Activated CD4-positive, alpha-beta memory T cell treated with anti-CD3 and anti-CD28 coated beads for 36 hours (primary cell): ENCODE measurements at regions of chr5 and their contacts with region 1.

Region 1: GRCh38 chr5:179623003-179623880 is at the start of gene HNRNPH1:
- DNase-seq: peak; percentile 99
- H3K4me3 Mint-ChIP-seq: peak within 1 kb of the TSS; percentile 98
- H3K27ac Mint-ChIP-seq: peak within 1 kb of the TSS; percentile 99
- H3K4me1 Mint-ChIP-seq: peaks cover 35% of the 10 kb centered on the region
- H3K27me3 Mint-ChIP-seq: no peaks in the 10 kb centered on the region
- total RNA-seq, gene HNRNPH1: 604 to 611 TPM

Region 2: DNA sequence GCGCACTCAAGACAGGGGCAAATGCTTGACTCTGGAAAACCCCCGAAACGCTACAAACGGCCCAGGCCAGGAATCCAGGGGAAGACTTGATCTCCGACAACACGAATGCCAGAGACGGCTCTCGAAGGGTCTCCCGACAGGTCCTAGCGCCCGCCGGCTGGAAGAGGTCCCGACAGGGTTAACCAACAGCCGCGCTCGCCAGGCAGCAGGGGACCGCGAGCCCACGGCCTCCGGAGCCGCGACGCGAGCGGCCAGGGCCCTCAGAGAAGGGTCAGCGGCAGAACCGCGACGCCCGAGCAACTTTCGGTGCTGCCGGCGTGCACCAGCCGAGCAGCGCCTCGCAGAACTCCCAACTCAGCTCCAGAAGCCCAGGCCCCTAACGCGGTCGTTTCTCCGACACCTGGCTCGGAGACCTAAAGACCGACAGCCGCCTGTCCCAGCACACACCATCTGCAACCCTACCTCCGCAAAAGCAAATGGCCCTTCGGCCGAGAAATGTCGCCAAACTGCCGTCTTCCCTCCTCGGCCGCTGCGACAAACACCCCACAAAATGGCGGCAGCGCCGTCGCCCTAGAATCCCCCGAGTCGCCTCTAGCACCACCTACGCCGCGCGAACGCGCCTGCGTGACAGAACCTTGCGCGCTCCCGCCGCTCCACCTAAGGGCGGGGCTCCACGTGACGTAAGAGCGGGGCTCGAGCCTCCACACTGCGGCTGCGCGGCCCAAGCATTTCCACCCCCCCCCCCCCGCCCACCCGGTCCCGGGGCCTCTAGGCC is 996.6 kb before region 1 on chr5 and contains the start of gene CLK4:
- CTCF ChIA-PET with region 1: no interaction called
- POLR2A ChIA-PET with region 1: no interaction called
- intact Hi-C with region 1: loop called (anchors 2 kb)
- DNase-seq: peak; percentile 97
- H3K4me3 Mint-ChIP-seq: peak within 1 kb of the TSS; percentile 92
- H3K27ac Mint-ChIP-seq: peak within 1 kb of the TSS; percentile 98
- H3K4me1 Mint-ChIP-seq: peaks cover 28% of the 10 kb centered on the region
- H3K27me3 Mint-ChIP-seq: no peaks in the 10 kb centered on the region
- total RNA-seq, gene CLK4: 25.1 to 26.0 TPM

Region 3: GRCh38 chr5:179154991-179155955 is 468.0 kb before region 1 on chr5:
- CTCF ChIA-PET with region 1: no interaction called
- POLR2A ChIA-PET with region 1: no interaction called
- intact Hi-C with region 1: no loop called
- DNase-seq: peak; percentile 24
- H3K4me3 Mint-ChIP-seq: no peak overlapping the region
- H3K27ac Mint-ChIP-seq: no peak overlapping the region
- H3K4me1 Mint-ChIP-seq: no peaks in the 10 kb centered on the region
- H3K27me3 Mint-ChIP-seq: peaks cover 4% of the 10 kb centered on the region

Region 4: DNA sequence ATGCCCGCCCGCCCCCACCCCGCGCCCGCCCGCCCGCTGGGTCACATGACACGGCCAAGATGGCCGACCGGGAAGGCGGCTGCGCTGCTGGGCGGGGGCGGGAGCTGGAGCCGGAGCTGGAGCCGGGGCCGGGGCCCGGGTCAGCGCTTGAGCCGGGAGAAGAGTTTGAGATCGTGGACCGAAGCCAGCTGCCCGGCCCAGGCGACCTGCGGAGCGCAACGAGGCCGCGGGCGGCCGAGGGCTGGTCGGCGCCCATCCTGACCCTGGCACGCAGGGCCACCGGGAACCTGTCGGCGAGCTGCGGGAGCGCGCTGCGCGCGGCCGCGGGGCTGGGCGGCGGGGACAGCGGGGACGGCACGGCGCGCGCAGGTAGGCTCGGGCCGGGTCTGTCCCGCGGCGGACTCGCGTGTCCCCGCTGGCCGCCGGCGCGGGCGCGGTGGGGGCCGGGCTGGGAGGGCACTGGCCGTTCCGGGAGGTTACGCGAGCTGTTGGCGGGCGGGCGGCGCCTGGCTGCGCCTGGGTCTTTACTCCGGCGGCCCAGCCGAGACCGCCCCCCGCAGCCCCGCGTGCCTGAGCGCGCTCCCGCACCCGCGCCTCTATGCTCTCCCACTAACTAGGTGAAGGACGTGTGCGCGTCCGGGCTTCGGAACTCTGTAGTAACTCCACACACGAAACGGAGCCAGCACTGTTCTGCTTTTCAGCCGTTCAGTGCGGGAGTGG is 72.6 kb before region 1 on chr5 and contains the start of gene RUFY1:
- CTCF ChIA-PET with region 1: no interaction called
- POLR2A ChIA-PET with region 1: interaction called, 24 read pairs
- intact Hi-C with region 1: loop called (anchors 2 kb)
- DNase-seq: peak; percentile 87
- H3K4me3 Mint-ChIP-seq: peak within 1 kb of the TSS; percentile 98
- H3K27ac Mint-ChIP-seq: peak within 1 kb of the TSS; percentile 99
- H3K4me1 Mint-ChIP-seq: peaks cover 36% of the 10 kb centered on the region
- H3K27me3 Mint-ChIP-seq: no peaks in the 10 kb centered on the region
- total RNA-seq, gene RUFY1: 30.3 to 34.0 TPM

Region 5: DNA sequence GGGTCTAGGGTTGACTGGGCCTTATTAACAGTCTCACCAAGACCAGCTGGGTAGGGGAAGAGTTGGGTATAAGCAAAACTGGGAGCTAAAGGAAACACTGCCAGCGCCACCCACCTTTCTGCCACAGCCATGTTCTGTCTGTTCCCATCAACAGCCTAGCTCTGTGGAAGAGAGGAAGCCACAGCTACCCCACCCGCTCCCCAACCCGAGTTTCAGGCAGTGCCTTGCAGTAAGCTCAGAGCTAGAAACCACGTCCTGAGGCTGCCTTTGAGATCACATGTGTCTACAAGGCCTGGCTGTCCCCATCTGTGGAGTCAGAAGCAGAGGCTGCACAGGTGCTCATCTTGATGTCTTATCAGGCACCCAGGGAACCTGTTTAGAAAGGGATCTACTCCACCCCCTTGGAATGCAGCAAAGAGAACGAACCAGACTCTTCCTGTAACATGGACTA is 15.1 kb before region 1 on chr5:
- CTCF ChIA-PET with region 1: interaction called, 13 read pairs
- POLR2A ChIA-PET with region 1: interaction called, 105 read pairs
- intact Hi-C with region 1: no loop called
- DNase-seq: peak; percentile 64
- H3K4me3 Mint-ChIP-seq: no peak overlapping the region
- H3K27ac Mint-ChIP-seq: peak overlapping the region; percentile 71
- H3K4me1 Mint-ChIP-seq: peaks cover 35% of the 10 kb centered on the region
- H3K27me3 Mint-ChIP-seq: no peaks in the 10 kb centered on the region

Region 6: DNA sequence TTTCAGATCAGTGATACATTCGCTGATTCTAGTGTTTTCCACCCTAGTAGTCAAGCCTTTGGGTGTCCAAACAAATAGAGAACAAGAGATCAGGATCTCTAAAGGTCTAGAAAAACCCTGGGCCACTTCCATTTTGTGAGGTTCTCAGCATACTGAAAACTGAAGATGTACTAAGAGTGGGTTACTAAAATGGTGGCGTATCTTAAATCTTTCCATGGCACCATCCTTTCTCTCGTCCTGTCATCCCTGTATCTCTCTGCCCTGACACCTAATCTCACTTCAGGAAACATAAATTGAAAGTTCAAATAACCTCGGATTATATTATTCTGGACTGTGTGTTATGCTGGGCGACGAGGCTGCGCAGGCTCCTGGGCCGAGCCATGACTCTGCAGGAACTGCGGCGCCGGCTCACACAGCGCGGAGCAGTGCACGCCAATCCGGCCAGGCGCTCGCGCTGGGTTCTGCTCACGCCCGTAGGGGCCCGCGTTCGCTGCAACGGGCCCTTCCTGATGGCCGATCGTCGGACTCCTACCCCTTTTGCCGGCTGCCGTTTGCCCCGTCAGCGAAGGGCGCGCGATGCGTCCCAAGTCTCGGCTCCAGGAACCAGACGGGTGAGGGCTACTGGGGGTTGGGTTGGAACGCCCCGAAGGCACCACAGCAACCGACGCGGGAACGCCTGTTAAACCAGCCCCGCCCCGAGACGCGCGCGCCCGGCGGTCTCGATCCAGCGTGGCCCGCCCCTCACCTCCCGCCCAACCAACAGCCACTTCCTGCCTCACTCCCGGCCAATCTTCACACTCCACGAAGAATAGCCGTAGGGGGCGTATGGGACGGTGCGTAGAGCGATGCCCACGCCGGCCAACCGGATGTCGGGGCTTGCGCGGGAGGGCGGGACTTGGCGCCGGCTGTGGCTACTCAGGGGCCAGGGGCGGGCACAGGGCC is 75.0 kb after region 1 on chr5:
- CTCF ChIA-PET with region 1: no interaction called
- POLR2A ChIA-PET with region 1: interaction called, 18 read pairs
- intact Hi-C with region 1: loop called (anchors 1 kb)
- DNase-seq: peak; percentile 100
- H3K4me3 Mint-ChIP-seq: peak overlapping the region; percentile 97
- H3K27ac Mint-ChIP-seq: peak overlapping the region; percentile 98
- H3K4me1 Mint-ChIP-seq: peaks cover 35% of the 10 kb centered on the region
- H3K27me3 Mint-ChIP-seq: no peaks in the 10 kb centered on the region

Region 7: DNA sequence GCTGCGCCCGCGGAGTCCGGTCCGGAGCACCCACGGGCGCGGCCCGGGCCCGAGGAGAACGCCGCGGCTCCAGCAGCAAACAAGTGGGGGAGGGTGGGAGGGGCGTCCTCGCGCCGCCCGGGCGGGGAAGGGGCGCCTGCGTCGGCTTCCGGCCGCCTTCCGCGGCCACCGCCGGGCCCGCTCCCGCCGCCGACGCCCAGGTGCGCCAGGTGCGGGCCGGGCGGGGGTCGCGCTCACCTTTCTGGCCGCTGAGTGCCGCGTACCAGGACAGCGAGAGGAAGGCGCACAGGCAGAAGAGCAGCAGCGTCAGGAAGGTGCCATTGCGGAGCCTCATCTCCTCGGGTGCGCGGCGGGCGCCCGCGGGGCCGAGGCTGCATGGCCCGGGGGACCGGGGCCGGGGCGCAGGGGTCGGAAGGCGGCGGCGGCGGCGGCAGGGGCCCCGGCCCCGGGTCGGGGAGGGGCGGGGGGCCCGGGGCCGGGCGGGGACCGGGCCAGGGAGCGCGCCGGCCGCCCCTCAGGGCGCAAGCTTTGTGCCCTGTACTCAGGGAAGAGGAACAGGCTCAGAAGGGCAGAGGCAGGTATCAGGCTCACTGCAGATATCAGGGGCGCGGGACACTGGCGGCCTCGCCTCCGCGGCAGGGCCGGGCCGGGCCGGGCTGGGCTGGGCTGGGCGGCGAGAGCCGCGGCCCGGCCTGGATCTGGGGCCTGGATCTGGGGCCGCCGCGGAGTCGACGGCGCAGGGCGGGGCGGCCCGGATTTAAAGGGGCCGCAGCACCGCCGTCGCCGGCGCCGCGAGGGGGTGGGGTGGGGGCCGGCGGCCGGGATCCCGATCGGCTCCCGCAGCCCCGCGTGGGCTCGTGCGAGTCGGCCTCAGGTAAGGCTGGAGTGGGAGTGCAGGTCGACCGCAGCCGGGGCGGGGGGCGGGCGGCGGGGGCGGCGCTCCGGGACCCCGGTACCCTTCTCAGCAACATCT is 183.3 kb after region 1 on chr5 and contains the start of gene MGAT4B:
- CTCF ChIA-PET with region 1: no interaction called
- POLR2A ChIA-PET with region 1: interaction called, 3 read pairs
- intact Hi-C with region 1: loop called (anchors 5 kb)
- DNase-seq: peak; percentile 72
- H3K4me3 Mint-ChIP-seq: peak within 1 kb of the TSS; percentile 86
- H3K27ac Mint-ChIP-seq: peak within 1 kb of the TSS; percentile 71
- H3K4me1 Mint-ChIP-seq: peaks cover 33% of the 10 kb centered on the region
- H3K27me3 Mint-ChIP-seq: no peaks in the 10 kb centered on the region
- total RNA-seq, gene MGAT4B: 95.8 to 96.8 TPM

Region 8: DNA sequence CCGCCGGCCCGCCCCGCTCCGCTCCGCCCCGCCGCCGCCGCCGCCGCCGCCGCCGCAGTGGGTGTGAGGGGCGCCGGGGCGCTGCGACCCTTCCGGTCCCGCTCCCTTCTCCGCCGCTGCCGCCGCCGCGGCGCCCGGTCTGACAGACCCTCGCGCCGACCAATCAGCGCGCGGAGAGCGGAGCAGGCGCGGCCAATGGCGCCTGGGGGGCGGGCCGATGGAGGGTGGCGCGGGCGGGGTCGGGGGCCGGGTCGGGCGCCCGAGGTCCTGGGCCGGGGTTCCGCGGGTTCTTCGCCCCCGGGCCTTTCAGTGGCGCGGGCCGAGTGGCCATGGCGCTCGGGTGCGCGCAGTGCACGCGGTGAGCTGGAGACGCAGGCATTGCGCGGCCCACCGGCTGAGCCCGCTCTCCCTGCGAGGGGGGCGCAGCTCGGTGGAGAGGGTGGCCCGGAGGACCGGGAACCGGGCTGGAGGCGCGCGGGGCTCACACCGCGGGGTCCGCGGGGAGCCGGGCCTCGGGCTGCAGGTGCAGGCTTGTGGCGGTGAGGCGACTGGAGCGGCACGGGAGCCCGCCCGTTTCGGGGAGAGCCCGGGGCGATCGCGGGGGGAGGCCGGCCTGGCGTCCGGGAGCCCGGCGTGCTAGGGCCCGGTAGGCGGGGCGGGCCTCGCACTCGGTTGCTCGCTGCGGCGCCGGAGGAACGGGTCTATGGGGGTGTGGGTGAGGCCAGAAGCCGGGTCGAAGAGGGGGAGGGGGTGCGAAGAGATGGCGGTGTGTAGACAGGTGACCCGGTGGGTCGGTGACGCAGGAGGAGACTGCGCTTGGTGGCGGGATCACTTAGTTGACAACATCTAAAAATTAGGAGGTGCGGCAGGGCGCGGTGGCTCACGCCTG is 668.9 kb after region 1 on chr5 and contains the start of gene MAPK9:
- CTCF ChIA-PET with region 1: no interaction called
- POLR2A ChIA-PET with region 1: no interaction called
- intact Hi-C with region 1: loop called (anchors 5 kb)
- DNase-seq: peak; percentile 87
- H3K4me3 Mint-ChIP-seq: peak within 1 kb of the TSS; percentile 92
- H3K27ac Mint-ChIP-seq: peak within 1 kb of the TSS; percentile 92
- H3K4me1 Mint-ChIP-seq: peaks cover 29% of the 10 kb centered on the region
- H3K27me3 Mint-ChIP-seq: no peaks in the 10 kb centered on the region
- total RNA-seq, gene MAPK9: 41.7 to 43.2 TPM